CD8-positive, alpha-beta T cell (primary cell): ENCODE measurements at regions of chr1 and their contacts with region 1.

Region 1: GRCh38 chr1:24415334-24415909 is at the start of gene NIPAL3:
- DNase-seq: peak; percentile 94 to 99 (median 97)
- ATAC-seq: peak; percentile 94
- H3K4me3 ChIP-seq: peak within 1 kb of the TSS; percentile 78 to 98
- H3K4me3 Mint-ChIP-seq: peak within 1 kb of the TSS; percentile 97
- H3K27ac ChIP-seq: peak within 1 kb of the TSS; percentile 57 to 64
- H3K27ac Mint-ChIP-seq: peak within 1 kb of the TSS; percentile 93
- H3K4me1 ChIP-seq: peaks cover 43% of the 10 kb centered on the region
- H3K4me1 Mint-ChIP-seq: peaks cover 79% of the 10 kb centered on the region
- H3K27me3 ChIP-seq: no peaks in the 10 kb centered on the region
- H3K27me3 Mint-ChIP-seq: no peaks in the 10 kb centered on the region
- CTCF ChIP-seq: peak; percentile 74
- total RNA-seq, gene NIPAL3: 22.3 to 22.7 TPM

Region 2: GRCh38 chr1:24391882-24392603 is 23.4 kb before region 1 on chr1:
- CTCF ChIA-PET with region 1: interaction called, 43 read pairs
- POLR2A ChIA-PET with region 1: interaction called, 6 read pairs
- intact Hi-C with region 1: loop called in 1 of 2 experiments (anchors 1 kb)
- DNase-seq: peak in 7 of 9 experiments; percentile 32 to 78 (median 65)
- ATAC-seq: peak; percentile 68
- H3K4me3 ChIP-seq: peak overlapping the region in 1 of 2 experiments; percentile 19
- H3K4me3 Mint-ChIP-seq: peak overlapping the region; percentile 78
- H3K27ac ChIP-seq: peak overlapping the region in 1 of 2 experiments; percentile 88
- H3K27ac Mint-ChIP-seq: peak overlapping the region; percentile 94
- H3K4me1 ChIP-seq: peaks cover 34% of the 10 kb centered on the region
- H3K4me1 Mint-ChIP-seq: peaks cover 31% of the 10 kb centered on the region
- H3K27me3 ChIP-seq: no peaks in the 10 kb centered on the region
- H3K27me3 Mint-ChIP-seq: no peaks in the 10 kb centered on the region
- CTCF ChIP-seq: peak; percentile 60

Region 3: DNA sequence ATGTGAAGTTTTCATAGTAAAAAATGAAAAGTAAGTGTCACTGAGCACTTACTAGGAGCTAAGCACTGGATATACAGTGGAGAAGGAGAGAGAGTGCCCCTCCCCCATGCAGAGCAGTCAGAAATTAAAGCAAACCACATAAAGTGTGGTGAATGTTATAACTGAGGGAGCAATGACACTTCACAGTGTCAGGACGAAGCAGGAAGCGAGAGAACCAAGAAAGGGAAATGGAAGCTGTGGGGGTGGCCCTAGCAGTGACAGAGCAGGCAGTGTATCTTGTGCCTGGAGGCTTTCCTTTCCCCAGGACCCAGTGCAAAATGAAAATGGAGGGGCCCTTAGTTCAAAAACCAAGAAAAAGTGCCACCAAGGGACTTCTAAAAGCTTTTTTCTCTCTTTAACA is 65.7 kb after region 1 on chr1:
- CTCF ChIA-PET with region 1: interaction called, 18 read pairs
- POLR2A ChIA-PET with region 1: interaction called, 6 read pairs
- intact Hi-C with region 1: loop called (anchors 5 kb)
- DNase-seq: peak in 7 of 9 experiments; percentile 24 to 78 (median 61)
- ATAC-seq: peak; percentile 59
- H3K4me3 ChIP-seq: peak overlapping the region in 1 of 2 experiments; percentile 40
- H3K4me3 Mint-ChIP-seq: peak overlapping the region; percentile 73
- H3K27ac ChIP-seq: peak overlapping the region; percentile 67 to 68
- H3K27ac Mint-ChIP-seq: peak overlapping the region; percentile 98
- H3K4me1 ChIP-seq: peaks cover 64% of the 10 kb centered on the region
- H3K4me1 Mint-ChIP-seq: peaks cover 65% of the 10 kb centered on the region
- H3K27me3 ChIP-seq: no peaks in the 10 kb centered on the region
- H3K27me3 Mint-ChIP-seq: no peaks in the 10 kb centered on the region
- CTCF ChIP-seq: no peak

Region 4: DNA sequence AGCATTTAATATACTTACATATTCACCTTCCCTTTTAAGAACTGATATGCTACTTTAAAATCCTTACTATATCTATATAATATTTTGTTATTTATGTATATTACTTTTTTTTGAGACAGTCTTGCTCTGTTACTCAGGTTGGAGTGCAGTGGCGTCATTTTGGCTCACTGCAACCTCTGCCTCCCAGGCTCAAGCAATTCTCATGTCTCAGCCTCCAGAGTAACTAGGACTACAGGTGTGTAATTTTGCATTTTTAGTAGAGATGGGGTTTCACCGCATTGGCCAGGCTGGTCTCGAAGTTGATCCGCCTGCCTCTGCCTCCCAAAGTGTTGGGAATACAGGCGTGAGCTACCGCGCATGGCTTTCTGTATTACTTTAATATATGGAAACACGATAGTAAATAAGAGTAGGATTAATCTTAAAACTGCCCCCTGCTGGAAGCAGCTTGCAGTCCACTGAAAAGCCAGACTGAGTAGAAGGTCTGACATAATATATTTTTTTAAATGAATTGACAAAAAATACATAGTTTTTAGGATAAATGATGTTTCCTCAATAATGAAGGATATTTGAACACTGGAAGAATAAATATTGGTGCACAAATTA is 111.6 kb after region 1 on chr1:
- CTCF ChIA-PET with region 1: interaction called, 57 read pairs
- POLR2A ChIA-PET with region 1: interaction called, 11 read pairs
- intact Hi-C with region 1: loop called in 1 of 2 experiments (anchors 1 kb)
- DNase-seq: peak in 7 of 9 experiments; percentile 13 to 72 (median 58)
- ATAC-seq: peak; percentile 81
- H3K4me3 ChIP-seq: no peak overlapping the region
- H3K4me3 Mint-ChIP-seq: no peak overlapping the region
- H3K27ac ChIP-seq: no peak overlapping the region
- H3K27ac Mint-ChIP-seq: peak overlapping the region; percentile 85
- H3K4me1 ChIP-seq: peaks cover 63% of the 10 kb centered on the region
- H3K4me1 Mint-ChIP-seq: peaks cover 63% of the 10 kb centered on the region
- H3K27me3 ChIP-seq: no peaks in the 10 kb centered on the region
- H3K27me3 Mint-ChIP-seq: no peaks in the 10 kb centered on the region
- CTCF ChIP-seq: peak; percentile 61

Region 5: GRCh38 chr1:24586970-24587820 is 171.8 kb after region 1 on chr1:
- CTCF ChIA-PET with region 1: interaction called, 75 read pairs
- POLR2A ChIA-PET with region 1: interaction called, 18 read pairs
- intact Hi-C with region 1: loop called (anchors 1 kb)
- DNase-seq: peak in 8 of 9 experiments; percentile 10 to 88 (median 58)
- ATAC-seq: peak; percentile 99
- H3K4me3 ChIP-seq: no peak overlapping the region
- H3K4me3 Mint-ChIP-seq: peak overlapping the region; percentile 11
- H3K27ac ChIP-seq: peak overlapping the region; percentile 27 to 30
- H3K27ac Mint-ChIP-seq: peak overlapping the region; percentile 92
- H3K4me1 ChIP-seq: peaks cover 5% of the 10 kb centered on the region
- H3K4me1 Mint-ChIP-seq: peaks cover 6% of the 10 kb centered on the region
- H3K27me3 ChIP-seq: no peaks in the 10 kb centered on the region
- H3K27me3 Mint-ChIP-seq: no peaks in the 10 kb centered on the region
- CTCF ChIP-seq: peak; percentile 92

Region 6: DNA sequence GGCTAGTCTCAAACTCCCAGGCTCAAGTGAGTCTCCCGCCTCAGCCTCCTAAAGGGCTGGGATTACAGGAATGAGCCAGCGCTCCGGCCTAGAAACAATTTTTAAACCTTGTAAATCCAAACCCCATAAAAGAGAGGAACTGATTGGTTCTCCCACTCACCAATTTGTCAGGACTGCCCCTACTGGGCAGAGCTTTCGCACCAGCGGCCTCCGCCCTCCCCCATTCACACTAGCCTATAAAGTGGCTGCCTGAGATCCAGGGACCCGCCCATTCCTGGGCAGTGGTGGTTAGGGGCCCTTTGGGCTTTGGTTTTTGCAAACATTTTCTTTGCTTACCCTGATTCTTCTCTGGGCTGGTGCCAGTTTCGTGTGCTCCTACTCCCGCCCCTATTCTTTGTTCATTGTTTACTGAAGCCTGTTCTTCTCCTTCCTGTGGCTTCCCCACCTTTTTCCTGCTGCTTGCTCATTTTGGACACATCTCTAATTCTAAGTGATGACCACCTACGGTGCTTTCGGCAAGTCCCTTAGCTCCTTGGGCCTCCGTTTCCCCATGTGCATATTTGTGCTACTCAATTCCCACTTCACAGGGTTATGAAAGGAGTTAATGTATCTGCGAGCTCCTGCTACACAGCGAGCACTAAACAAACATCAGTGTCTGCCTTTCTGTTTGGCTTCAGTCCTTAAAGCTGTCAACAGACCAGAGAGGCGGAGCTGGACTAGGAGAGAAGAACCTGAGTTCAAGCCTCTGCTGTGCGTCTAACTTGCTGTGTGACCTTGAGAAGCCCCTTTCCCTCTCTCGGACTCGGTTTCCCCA is 290.0 kb after region 1 on chr1:
- CTCF ChIA-PET with region 1: no interaction called
- POLR2A ChIA-PET with region 1: no interaction called
- intact Hi-C with region 1: no loop called
- DNase-seq: peak in 1 of 9 experiments; percentile 36
- ATAC-seq: peak; percentile 36
- H3K4me3 ChIP-seq: no peak overlapping the region
- H3K4me3 Mint-ChIP-seq: no peak overlapping the region
- H3K27ac ChIP-seq: no peak overlapping the region
- H3K27ac Mint-ChIP-seq: no peak overlapping the region
- H3K4me1 ChIP-seq: no peaks in the 10 kb centered on the region
- H3K4me1 Mint-ChIP-seq: peaks cover 14% of the 10 kb centered on the region
- H3K27me3 ChIP-seq: no peaks in the 10 kb centered on the region
- H3K27me3 Mint-ChIP-seq: no peaks in the 10 kb centered on the region
- CTCF ChIP-seq: no peak

Region 7: DNA sequence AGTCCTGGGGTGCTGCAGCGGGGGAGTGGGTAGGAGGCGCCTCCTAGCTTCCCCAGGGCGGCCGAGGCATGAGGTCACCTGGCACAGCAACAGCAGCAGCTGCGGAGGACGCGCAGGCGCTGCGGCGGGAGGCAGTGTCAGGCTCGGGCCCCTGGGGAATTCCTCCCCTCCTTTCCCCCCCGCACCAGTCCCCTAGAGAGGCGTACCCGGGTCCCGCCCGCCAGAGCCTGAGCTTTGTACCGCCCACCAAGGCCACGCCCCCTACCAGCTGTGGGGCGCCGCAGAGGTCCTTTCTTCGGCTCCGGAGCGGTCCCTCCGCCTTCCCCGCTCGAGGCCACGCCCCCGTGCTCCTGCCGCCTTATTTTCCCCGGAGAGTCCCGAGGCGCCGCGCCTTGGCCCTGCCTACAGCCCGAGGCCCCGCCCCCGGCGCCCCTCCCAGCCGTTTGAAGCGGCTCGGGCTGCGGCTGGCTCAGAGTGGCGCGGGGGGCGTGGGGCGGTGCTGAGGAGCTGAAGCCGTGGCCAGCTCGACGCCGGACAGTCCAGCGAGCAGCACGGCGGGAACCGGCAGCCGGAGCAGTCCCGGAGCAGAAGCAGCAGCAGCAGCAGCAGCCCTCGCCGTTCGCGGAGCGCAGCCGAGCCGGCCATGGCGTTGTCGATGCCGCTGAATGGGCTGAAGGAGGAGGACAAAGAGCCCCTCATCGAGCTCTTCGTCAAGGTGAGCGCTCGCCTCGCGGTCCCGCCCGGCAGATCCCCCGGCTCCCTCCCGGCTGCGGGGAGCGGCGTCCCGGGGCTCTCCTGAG is 329.7 kb after region 1 on chr1 and contains the start of gene CLIC4:
- CTCF ChIA-PET with region 1: no interaction called
- POLR2A ChIA-PET with region 1: no interaction called
- intact Hi-C with region 1: loop called in 1 of 2 experiments (anchors 2 kb)
- DNase-seq: peak; percentile 97 to 100 (median 99)
- ATAC-seq: peak; percentile 92
- H3K4me3 ChIP-seq: peak within 1 kb of the TSS; percentile 52 to 54
- H3K4me3 Mint-ChIP-seq: peak within 1 kb of the TSS; percentile 86
- H3K27ac ChIP-seq: no peak within 1 kb of the TSS
- H3K27ac Mint-ChIP-seq: peak within 1 kb of the TSS; percentile 72
- H3K4me1 ChIP-seq: peaks cover 8% of the 10 kb centered on the region
- H3K4me1 Mint-ChIP-seq: peaks cover 27% of the 10 kb centered on the region
- H3K27me3 ChIP-seq: peaks cover 0 to 3% of the 10 kb centered on the region in 2 experiments
- H3K27me3 Mint-ChIP-seq: peaks cover 6% of the 10 kb centered on the region
- CTCF ChIP-seq: no peak
- total RNA-seq, gene CLIC4: 1.2 to 1.3 TPM